Activated CD4-positive, alpha-beta T cell treated with anti-CD3 and anti-CD28 coated beads for 36 hours (primary cell): ENCODE measurements at regions of chr3 and their contacts with region 1.

Region 1: DNA sequence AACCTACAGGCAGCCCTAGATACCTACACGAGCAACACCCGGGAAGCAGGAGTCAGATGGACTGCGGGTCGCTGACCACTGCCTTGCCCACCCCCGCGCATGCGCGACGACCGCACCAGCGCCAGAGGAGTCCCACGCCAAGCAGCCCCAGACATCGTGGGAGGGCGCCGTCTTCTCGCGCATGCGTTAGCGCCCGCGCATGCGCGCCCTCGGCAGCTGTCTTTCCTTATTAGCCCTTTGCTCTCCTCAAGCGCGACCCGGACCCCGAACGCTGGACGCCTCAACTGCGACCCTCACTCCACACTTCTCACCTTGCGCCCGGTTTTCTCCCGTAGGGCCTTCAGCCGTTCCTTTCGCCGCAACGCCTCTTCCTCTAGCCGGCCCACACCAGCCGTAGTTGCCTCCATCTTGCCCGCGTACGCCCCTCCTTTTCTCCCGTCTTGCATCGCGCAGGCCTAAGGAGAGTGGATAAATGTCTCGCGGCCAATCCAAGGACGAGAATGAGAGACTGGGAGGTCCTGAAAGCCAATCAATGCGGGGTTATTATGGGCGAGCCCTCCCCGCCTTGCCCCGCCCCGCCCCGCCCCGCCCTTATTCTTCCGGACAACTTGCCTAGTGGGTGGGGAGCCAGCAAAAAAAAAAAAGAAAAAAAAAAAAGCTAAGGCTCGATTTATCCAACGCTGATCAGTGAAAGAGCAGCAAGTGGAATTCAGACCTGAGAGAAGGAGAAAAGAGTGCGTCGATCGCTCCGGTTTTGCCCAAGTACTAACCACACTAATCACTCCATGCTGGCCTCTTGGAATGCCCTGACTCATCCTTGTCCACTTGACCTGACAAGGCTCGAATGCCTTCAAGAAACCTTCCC is at the start of gene CCDC12:
- DNase-seq: peak; percentile 96
- ATAC-seq: peak; percentile 82
- H3K4me3 Mint-ChIP-seq: peak within 1 kb of the TSS; percentile 92
- H3K27ac Mint-ChIP-seq: peak within 1 kb of the TSS; percentile 99
- H3K4me1 Mint-ChIP-seq: peaks cover 66% of the 10 kb centered on the region
- H3K27me3 Mint-ChIP-seq: no peaks in the 10 kb centered on the region
- total RNA-seq, gene CCDC12: 45.4 to 47.8 TPM

Region 2: GRCh38 chr3:46866720-46867549 is 109.6 kb before region 1 on chr3:
- CTCF ChIA-PET with region 1: no interaction called
- POLR2A ChIA-PET with region 1: no interaction called
- intact Hi-C with region 1: no loop called
- DNase-seq: peak; percentile 90
- ATAC-seq: peak; percentile 79
- H3K4me3 Mint-ChIP-seq: no peak overlapping the region
- H3K27ac Mint-ChIP-seq: no peak overlapping the region
- H3K4me1 Mint-ChIP-seq: no peaks in the 10 kb centered on the region
- H3K27me3 Mint-ChIP-seq: no peaks in the 10 kb centered on the region

Region 3: GRCh38 chr3:46947981-46948791 is 28.4 kb before region 1 on chr3:
- CTCF ChIA-PET with region 1: interaction called, 3 read pairs
- POLR2A ChIA-PET with region 1: interaction called, 15 read pairs
- intact Hi-C with region 1: no loop called
- DNase-seq: peak; percentile 77
- ATAC-seq: peak; percentile 81
- H3K4me3 Mint-ChIP-seq: peak overlapping the region; percentile 62
- H3K27ac Mint-ChIP-seq: peak overlapping the region; percentile 92
- H3K4me1 Mint-ChIP-seq: peaks cover 80% of the 10 kb centered on the region
- H3K27me3 Mint-ChIP-seq: no peaks in the 10 kb centered on the region

Region 4: GRCh38 chr3:46965151-46965550 is 11.4 kb before region 1 on chr3:
- CTCF ChIA-PET with region 1: no interaction called
- POLR2A ChIA-PET with region 1: interaction called, 12 read pairs
- intact Hi-C with region 1: no loop called
- DNase-seq: peak; percentile 48
- ATAC-seq: peak; percentile 45
- H3K4me3 Mint-ChIP-seq: no peak overlapping the region
- H3K27ac Mint-ChIP-seq: no peak overlapping the region
- H3K4me1 Mint-ChIP-seq: peaks cover 84% of the 10 kb centered on the region
- H3K27me3 Mint-ChIP-seq: no peaks in the 10 kb centered on the region

Region 5: DNA sequence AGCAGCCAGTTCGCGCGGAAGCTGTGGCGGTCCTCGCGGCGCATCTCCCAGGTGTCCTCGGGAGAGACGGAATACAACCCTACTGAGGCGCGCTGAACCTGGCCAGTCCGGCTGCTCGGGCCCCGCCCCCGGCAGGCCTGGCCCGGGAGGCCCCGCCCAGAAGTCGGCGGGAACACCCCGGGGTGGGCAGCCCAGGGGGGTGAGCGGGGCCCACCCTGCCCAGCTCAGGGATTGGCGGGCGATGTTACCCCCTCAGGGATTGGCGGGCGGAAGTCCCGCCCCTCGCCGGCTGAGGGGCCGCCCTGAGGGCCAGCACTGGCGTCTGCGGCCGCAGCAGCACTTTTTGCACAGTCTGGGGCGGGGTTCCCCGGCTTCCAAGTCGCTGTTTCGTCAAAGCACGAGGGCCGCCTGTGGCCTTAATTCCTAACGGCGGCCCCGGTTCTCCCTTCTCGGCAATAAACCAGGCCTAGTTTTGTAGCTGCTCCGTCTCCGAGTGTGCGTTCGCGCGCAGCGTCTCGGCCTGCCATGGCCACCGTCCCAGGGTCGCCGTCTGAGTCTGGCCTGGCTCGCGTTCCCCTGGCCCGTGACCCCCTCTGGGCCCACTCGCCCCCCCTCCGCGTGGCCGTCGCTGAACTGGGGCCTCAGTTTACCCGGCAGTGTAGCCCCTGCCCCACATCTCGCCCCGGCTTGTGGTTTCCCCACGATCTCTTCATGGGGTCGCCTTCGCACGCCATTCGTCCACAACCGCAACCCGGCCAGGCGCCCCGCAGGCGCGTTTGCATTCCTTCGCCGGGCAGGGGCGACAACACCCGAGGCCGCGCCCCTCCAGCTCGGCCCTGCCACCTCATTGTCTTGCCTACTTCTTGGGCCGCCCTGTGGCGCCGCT is 32.9 kb after region 1 on chr3:
- CTCF ChIA-PET with region 1: no interaction called
- POLR2A ChIA-PET with region 1: interaction called, 4 read pairs
- intact Hi-C with region 1: loop called (anchors 1 kb)
- DNase-seq: peak; percentile 84
- ATAC-seq: peak; percentile 93
- H3K4me3 Mint-ChIP-seq: peak overlapping the region; percentile 57
- H3K27ac Mint-ChIP-seq: peak overlapping the region; percentile 58
- H3K4me1 Mint-ChIP-seq: peaks cover 4% of the 10 kb centered on the region
- H3K27me3 Mint-ChIP-seq: no peaks in the 10 kb centered on the region

Region 6: GRCh38 chr3:47475570-47476329 is 499.2 kb after region 1 on chr3 and contains the start of gene SCAP:
- CTCF ChIA-PET with region 1: no interaction called
- POLR2A ChIA-PET with region 1: no interaction called
- intact Hi-C with region 1: loop called in 1 of 2 experiments (anchors 5 kb)
- DNase-seq: peak; percentile 98
- ATAC-seq: peak; percentile 95
- H3K4me3 Mint-ChIP-seq: peak within 1 kb of the TSS; percentile 89
- H3K27ac Mint-ChIP-seq: peak within 1 kb of the TSS; percentile 84
- H3K4me1 Mint-ChIP-seq: peaks cover 33% of the 10 kb centered on the region
- H3K27me3 Mint-ChIP-seq: no peaks in the 10 kb centered on the region
- total RNA-seq, gene SCAP: 44.5 to 51.2 TPM